ENCODE measurements at regions of chrX and their contacts with region 1.

Region 1: DNA sequence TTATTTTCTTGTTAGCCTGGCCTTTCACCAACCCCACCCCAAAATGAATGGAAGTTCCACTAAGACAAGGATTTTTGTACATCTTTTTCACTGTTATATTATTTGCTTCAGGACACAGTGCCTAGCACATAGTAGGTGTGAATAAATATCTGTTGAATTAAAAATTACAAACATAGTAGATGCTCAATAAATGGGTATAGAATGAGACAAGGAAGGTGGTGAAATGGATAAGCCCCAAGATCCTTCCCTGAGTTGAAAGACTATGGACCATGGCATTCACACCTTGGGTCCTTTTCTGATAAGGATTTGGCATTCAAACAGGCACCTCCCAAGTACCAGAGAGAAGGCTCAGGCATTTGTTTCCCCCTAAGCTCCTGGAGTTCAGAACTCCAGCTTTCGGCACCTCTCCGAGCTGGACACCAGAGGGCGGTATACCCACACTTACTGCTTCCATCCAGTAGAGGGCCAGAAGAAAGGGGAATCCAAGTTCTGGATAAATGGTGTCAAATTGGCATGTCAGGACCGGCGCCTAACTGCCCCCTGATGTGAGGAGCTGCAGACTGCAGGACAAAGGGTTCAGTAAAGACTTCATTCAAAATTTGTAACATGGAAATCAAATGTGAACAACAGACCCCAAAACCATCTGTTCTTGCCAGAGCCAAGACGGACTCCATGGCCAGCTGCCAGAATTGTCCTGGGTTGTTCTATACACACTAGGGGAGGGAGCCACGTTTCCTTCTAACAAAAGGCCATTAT is 193.0 kb downstream of the GPC3 start:
- DNase-seq: peak; percentile 18 to 63 (median 56)
- ATAC-seq: peak; percentile 37 to 75 (median 70)
- H3K4me3 ChIP-seq: peak overlapping the region in 8 of 12 donors; percentile 12 to 41 (median 26)
- H3K27ac ChIP-seq: no peak overlapping the region
- H3K4me1 ChIP-seq: no peaks in the 10 kb centered on the region
- H3K27me3 ChIP-seq: peaks cover 0 to 34% (median 0%) of the 10 kb centered on the region in 9 donors
- CTCF ChIP-seq: peak; percentile 67 to 96 (median 81)
- POLR2A ChIP-seq: no peak

Region 2: DNA sequence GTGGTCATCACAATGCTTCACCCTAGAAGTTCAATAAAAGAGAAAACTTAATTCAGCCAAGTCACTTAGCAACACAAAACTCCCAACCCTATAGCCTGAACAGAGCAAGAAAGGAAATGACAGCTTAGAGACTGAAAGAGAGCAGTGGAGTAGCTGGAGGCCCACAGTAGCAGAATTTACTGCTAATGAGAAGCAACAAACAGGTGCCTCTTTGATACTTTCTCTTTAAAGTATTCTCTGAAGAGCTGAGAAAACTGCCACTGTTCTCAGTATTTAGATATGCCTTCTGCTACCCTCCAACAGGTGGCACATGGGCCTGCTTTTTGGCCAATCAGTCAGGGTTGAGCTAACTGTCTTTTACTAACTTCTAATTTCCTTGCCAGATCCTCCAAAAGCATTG is 47.0 kb before region 1 on chrX:
- intact Hi-C with region 1: no loop called
- DNase-seq: no peak
- ATAC-seq: no peak
- H3K4me3 ChIP-seq: no peak overlapping the region
- H3K27ac ChIP-seq: no peak overlapping the region
- H3K4me1 ChIP-seq: no peaks in the 10 kb centered on the region
- H3K27me3 ChIP-seq: peaks cover 0 to 25% (median 0%) of the 10 kb centered on the region in 9 donors
- CTCF ChIP-seq: no peak
- POLR2A ChIP-seq: no peak

Region 3: GRCh38 chrX:133921764-133922389 is 129.5 kb after region 1 on chrX:
- intact Hi-C with region 1: loop called in 8 of 10 experiments (anchors 2 to 10 kb)
- DNase-seq: peak in 4 of 5 donors; percentile 11 to 39 (median 22)
- ATAC-seq: peak in 3 of 4 donors; percentile 44 to 70 (median 70)
- H3K4me3 ChIP-seq: no peak overlapping the region
- H3K27ac ChIP-seq: no peak overlapping the region
- H3K4me1 ChIP-seq: peaks cover 0 to 5% (median 0%) of the 10 kb centered on the region in 12 donors
- H3K27me3 ChIP-seq: peaks cover 0 to 7% (median 0%) of the 10 kb centered on the region in 9 donors
- CTCF ChIP-seq: peak in 11 of 12 donors; percentile 20 to 46 (median 28)
- POLR2A ChIP-seq: no peak

Region 4: DNA sequence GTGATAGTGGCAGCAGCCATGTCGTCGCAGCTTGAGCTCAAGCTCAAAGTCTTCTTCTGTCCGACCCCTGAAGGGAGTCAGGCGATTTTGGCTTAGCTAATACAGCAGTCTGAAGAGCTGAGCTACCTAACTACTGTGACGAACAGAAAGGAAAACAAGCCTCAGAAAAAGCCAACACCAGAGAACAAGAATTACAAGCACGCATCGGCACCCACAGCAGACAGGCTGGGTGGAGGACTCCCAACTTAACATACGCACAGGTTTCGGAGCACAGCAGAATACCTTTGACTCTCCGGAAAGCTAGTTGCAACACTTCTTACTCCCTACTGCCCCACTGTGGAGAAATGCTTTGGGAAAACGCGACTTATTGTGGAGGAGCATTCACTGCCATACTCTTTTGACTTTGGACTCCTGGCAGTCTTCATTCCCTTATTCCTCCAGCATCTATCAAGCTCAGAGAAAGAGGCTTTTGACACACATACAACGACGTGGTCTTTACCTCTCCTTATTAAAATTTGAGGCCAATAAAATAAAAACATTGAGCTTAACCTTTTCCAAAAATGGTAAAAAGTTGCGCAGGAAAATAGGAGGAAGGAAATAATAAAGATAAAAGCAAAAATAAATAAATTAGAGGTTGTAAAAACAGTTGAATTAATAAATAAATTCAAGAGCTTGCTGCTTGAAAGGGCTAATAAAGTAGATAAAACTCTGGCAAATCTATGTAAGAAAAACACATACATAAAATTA is 234.4 kb after region 1 on chrX:
- intact Hi-C with region 1: loop called in 4 of 10 experiments (anchors 5 kb)
- DNase-seq: peak in 1 of 5 donors; percentile 19
- ATAC-seq: peak in 2 of 4 donors; percentile 57 to 65
- H3K4me3 ChIP-seq: peak overlapping the region in 6 of 12 donors; percentile 17 to 40 (median 30)
- H3K27ac ChIP-seq: no peak overlapping the region
- H3K4me1 ChIP-seq: no peaks in the 10 kb centered on the region
- H3K27me3 ChIP-seq: peaks cover 0 to 7% (median 0%) of the 10 kb centered on the region in 9 donors
- CTCF ChIP-seq: peak in 10 of 12 donors; percentile 20 to 55 (median 39)
- POLR2A ChIP-seq: no peak

Region 5: DNA sequence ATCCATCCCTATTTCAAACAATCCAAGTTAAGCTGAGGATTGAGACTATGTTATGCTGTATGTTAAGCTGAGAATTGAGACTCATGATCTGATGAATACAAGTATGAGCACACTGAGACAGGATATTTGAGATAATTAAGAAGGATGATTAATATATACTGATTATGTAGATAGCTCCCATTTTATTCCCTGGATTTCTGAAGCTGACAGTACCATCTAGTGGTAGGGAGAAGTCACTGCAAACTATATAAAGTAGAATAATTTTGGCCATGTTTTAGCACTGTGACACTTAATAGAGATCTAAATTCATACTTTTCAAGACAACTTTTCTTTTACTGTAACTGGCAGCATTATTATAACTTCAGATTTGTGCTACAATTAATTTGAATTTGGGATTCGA is 603.8 kb after region 1 on chrX:
- intact Hi-C with region 1: loop called in 2 of 10 experiments (anchors 5 to 10 kb)
- DNase-seq: no peak
- ATAC-seq: no peak
- H3K4me3 ChIP-seq: no peak overlapping the region
- H3K27ac ChIP-seq: no peak overlapping the region
- H3K4me1 ChIP-seq: no peaks in the 10 kb centered on the region
- H3K27me3 ChIP-seq: peaks cover 0 to 3% (median 0%) of the 10 kb centered on the region in 9 donors
- CTCF ChIP-seq: peak; percentile 37 to 67 (median 60)
- POLR2A ChIP-seq: no peak

Measured in heart left ventricle (tissue), 16 donors.